Uterus (tissue), 4 donors: ENCODE measurements at regions of chr17 and their contacts with region 1.

Region 1: GRCh38 chr17:45895304-45895968 is 1.1 kb downstream of the MAPT start:
- DNase-seq: peak in 1 of 2 donors; percentile 19
- H3K4me3 ChIP-seq: peak overlapping the region; percentile 60 to 61
- H3K27ac ChIP-seq: no peak overlapping the region
- H3K4me1 ChIP-seq: peaks cover 0 to 18% of the 10 kb centered on the region in 2 donors
- H3K27me3 ChIP-seq: peaks cover 15 to 24% of the 10 kb centered on the region in 2 donors
- CTCF ChIP-seq: no peak
- POLR2A ChIP-seq: no peak

Region 2: GRCh38 chr17:47675380-47676198 is 1780.2 kb after region 1 on chr17:
- intact Hi-C with region 1: loop called (anchors 5 kb)
- DNase-seq: no peak
- H3K4me3 ChIP-seq: no peak overlapping the region
- H3K27ac ChIP-seq: no peak overlapping the region
- H3K4me1 ChIP-seq: no peaks in the 10 kb centered on the region
- H3K27me3 ChIP-seq: no peaks in the 10 kb centered on the region
- CTCF ChIP-seq: no peak
- POLR2A ChIP-seq: no peak